ENCODE measurements at regions of chr11 and their contacts with region 1.

Region 1: GRCh38 chr11:69249311-69250185 is 44.4 kb upstream of the MYEOV start:
- DNase-seq: no peak
- ATAC-seq: no peak

Region 2: GRCh38 chr11:69145062-69145405 is 104.5 kb before region 1 on chr11:
- intact Hi-C with region 1: loop called (anchors 10 kb)
- DNase-seq: no peak
- ATAC-seq: no peak

Region 3: DNA sequence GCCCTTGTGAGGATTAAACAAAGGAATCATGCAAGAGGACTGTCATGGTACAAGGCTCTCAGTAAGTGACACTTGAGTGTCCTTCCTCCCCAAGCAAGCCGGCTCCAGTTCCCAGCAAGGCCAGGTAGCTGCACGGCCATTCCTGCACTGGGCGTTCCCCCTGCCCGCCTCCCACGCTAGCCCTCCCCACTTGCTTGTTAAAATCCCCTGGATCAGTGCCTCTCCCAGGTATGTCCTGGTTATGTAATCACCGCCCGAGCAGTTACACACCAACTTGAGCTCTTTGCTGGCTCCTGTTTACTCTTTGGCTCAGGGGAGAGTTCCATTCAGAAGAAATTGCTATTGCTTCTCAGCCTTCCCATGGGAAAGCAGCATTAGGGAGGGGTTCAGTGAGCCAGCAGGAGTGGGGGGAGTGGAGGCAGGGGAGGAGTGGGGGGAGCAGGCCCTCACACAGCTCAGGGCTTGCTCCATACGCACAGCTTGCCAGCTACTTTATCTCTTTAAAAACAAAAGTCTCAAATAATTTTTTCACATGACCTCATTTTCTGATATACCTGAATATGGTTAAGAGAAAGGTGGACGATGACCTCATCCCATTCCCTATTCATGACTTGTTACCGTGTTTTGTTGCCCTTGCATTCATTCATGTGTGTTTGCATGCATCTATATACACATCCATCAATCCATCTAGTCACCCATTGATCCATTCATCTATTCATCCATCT is 25.1 kb after region 1 on chr11:
- intact Hi-C with region 1: loop called (anchors 1 kb)
- DNase-seq: peak; percentile 26
- ATAC-seq: no peak